CD4-positive, alpha-beta T cell (primary cell): ENCODE measurements at regions of chr7 and their contacts with region 1.

Region 1: DNA sequence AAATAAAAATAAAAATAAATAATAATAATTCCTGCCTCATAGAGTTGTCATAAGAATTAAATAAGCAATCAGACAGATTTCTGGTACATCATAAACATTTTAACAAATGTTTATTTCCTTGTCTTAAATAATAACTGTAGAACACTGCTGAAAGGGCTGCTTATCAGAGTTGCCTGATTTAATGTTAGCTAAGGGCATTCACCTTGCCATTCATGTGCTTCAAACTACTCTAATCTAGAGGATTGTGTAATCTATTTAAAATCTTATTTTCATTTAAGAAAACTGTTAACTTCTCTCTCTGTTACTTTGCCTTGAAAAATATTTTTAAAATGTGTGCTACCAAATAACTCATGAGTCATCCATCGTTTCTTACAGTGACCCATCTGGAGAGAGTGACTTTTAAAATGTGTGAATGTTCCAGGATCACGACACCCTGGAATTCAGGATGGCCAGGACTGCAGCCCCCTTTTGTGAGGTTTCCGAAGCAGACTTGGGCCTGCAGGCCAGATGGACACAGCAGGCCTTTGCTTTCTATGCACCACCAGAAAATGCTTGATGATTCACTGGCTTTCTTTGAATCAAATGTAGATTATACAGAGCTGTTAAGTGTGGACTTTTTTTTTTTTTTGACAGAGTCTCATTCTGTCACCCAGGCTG is 109.1 kb upstream of the TNS3 start:
- DNase-seq: no peak
- ATAC-seq: no peak
- H3K4me3 ChIP-seq: no peak overlapping the region
- H3K4me3 Mint-ChIP-seq: no peak overlapping the region
- H3K27ac ChIP-seq: no peak overlapping the region
- H3K27ac Mint-ChIP-seq: no peak overlapping the region
- H3K4me1 ChIP-seq: no peaks in the 10 kb centered on the region
- H3K4me1 Mint-ChIP-seq: no peaks in the 10 kb centered on the region
- H3K27me3 ChIP-seq: no peaks in the 10 kb centered on the region
- H3K27me3 Mint-ChIP-seq: no peaks in the 10 kb centered on the region
- CTCF ChIP-seq: no peak

Region 2: DNA sequence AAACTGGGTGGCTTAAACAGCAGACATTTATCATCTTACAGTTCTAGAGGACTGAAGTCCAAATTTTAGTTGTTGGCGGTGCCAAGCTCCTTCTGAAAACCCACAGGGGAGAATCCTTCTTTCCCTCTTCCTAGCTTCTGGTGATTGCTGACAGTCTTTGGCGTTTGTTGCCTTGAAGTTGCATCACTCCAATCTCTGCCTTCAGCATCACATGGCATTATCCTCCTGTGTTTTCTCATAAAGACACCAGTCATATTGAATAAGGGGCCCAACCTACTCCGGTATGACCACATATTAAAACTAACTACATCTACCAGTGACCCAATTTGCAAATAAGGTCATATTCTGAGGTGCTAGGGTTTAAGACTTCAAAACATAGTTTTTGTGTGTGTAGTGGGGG is 1297.9 kb before region 1 on chr7:
- CTCF ChIA-PET with region 1: no interaction called
- POLR2A ChIA-PET with region 1: no interaction called
- intact Hi-C with region 1: no loop called
- DNase-seq: no peak
- ATAC-seq: no peak
- H3K4me3 ChIP-seq: no peak overlapping the region
- H3K4me3 Mint-ChIP-seq: no peak overlapping the region
- H3K27ac ChIP-seq: no peak overlapping the region
- H3K27ac Mint-ChIP-seq: no peak overlapping the region
- H3K4me1 ChIP-seq: no peaks in the 10 kb centered on the region
- H3K4me1 Mint-ChIP-seq: no peaks in the 10 kb centered on the region
- H3K27me3 ChIP-seq: no peaks in the 10 kb centered on the region
- H3K27me3 Mint-ChIP-seq: no peaks in the 10 kb centered on the region
- CTCF ChIP-seq: no peak

Region 3: DNA sequence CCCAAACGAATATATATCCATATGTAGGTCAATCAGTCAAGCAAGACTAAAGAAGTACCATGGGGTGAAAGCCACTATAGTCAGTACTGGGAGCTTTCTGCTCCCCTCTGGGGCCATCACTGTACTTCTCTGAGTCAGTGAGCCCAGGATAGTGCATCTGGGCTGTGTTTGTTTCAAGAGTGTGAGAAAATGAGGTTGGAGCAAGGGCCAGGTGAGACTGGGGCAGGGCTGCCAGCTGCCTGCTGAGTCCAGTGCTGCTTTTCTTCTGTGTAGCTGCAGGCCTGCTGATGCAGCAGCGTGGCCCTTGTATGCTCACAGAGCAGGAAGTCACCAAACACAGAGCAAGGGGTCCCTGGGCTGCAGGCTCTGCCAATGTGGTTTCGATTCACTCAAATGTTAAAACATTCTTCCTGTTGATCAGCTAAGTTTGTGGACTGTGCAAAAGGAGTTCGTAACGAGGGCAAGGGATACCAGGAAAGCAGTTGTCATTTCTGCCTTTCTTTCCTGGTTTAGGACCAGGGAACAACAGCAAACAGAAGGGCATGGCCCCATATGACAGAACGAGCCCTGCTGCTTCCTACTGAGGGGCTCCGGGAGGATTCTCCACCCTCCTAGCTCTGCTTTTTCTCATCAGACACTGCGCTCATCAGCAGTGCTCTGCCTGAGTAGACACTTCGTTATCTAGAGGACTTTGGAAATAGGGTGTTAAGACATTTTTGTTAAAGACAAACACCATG is 43.7 kb before region 1 on chr7:
- CTCF ChIA-PET with region 1: no interaction called
- POLR2A ChIA-PET with region 1: no interaction called
- intact Hi-C with region 1: no loop called
- DNase-seq: peak in 1 of 14 experiments; percentile 6
- ATAC-seq: no peak
- H3K4me3 ChIP-seq: no peak overlapping the region
- H3K4me3 Mint-ChIP-seq: no peak overlapping the region
- H3K27ac ChIP-seq: no peak overlapping the region
- H3K27ac Mint-ChIP-seq: no peak overlapping the region
- H3K4me1 ChIP-seq: peaks cover 6% of the 10 kb centered on the region
- H3K4me1 Mint-ChIP-seq: peaks cover 8% of the 10 kb centered on the region
- H3K27me3 ChIP-seq: no peaks in the 10 kb centered on the region
- H3K27me3 Mint-ChIP-seq: no peaks in the 10 kb centered on the region
- CTCF ChIP-seq: no peak

Region 4: GRCh38 chr7:48011323-48011722 is 320.3 kb after region 1 on chr7:
- CTCF ChIA-PET with region 1: no interaction called
- POLR2A ChIA-PET with region 1: no interaction called
- intact Hi-C with region 1: loop called in 1 of 2 experiments (anchors 5 kb)
- DNase-seq: no peak
- ATAC-seq: no peak
- H3K4me3 ChIP-seq: no peak overlapping the region
- H3K4me3 Mint-ChIP-seq: no peak overlapping the region
- H3K27ac ChIP-seq: no peak overlapping the region
- H3K27ac Mint-ChIP-seq: no peak overlapping the region
- H3K4me1 ChIP-seq: no peaks in the 10 kb centered on the region
- H3K4me1 Mint-ChIP-seq: no peaks in the 10 kb centered on the region
- H3K27me3 ChIP-seq: no peaks in the 10 kb centered on the region
- H3K27me3 Mint-ChIP-seq: peaks cover 14% of the 10 kb centered on the region
- CTCF ChIP-seq: no peak